Calu3 (cell line): ENCODE measurements at regions of chr20 and their contacts with region 1.

Region 1: DNA sequence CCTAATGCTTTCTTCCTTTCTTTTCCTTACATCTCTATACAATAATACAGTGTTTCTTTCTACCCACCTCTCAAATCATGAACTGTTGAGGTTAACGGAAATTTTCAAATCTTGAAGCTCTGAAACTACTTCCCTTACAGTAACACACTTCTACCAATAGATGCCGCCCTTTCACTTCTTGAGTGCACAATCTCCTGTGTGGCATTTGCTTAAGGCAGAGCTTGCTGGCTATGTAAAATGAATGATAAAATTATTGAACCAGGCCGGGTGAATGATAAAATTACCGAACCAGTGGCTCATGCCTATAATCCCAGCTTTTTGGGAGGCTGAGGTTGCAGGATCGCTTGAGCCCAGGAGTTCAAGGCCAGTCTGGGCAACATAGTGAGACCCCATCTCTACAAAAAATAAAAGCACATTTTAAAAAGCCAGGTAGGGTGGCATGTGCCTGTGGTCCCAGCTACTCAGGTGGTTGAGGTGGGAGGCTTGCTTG is 56.8 kb downstream of the KCNS1 start:
- DNase-seq: peak; percentile 67
- H3K4me3 Mint-ChIP-seq: no peak overlapping the region
- H3K27ac Mint-ChIP-seq: peak overlapping the region; percentile 8
- H3K4me1 Mint-ChIP-seq: peaks cover 33% of the 10 kb centered on the region
- H3K27me3 Mint-ChIP-seq: no peaks in the 10 kb centered on the region
- CTCF ChIP-seq: peak; percentile 73

Region 2: GRCh38 chr20:45080867-45081624 is 36.9 kb after region 1 on chr20:
- CTCF ChIA-PET with region 1: interaction called, 7 read pairs
- intact Hi-C with region 1: loop called (anchors 5 kb)
- DNase-seq: peak; percentile 58
- H3K4me3 Mint-ChIP-seq: no peak overlapping the region
- H3K27ac Mint-ChIP-seq: peak overlapping the region; percentile 5
- H3K4me1 Mint-ChIP-seq: no peaks in the 10 kb centered on the region
- H3K27me3 Mint-ChIP-seq: no peaks in the 10 kb centered on the region
- CTCF ChIP-seq: peak; percentile 69

Region 3: GRCh38 chr20:45104786-45105185 is 60.7 kb after region 1 on chr20:
- CTCF ChIA-PET with region 1: interaction called, 26 read pairs
- intact Hi-C with region 1: loop called (anchors 2 kb)
- DNase-seq: peak; percentile 80
- H3K4me3 Mint-ChIP-seq: no peak overlapping the region
- H3K27ac Mint-ChIP-seq: peak overlapping the region; percentile 21
- H3K4me1 Mint-ChIP-seq: peaks cover 48% of the 10 kb centered on the region
- H3K27me3 Mint-ChIP-seq: no peaks in the 10 kb centered on the region
- CTCF ChIP-seq: no peak

Region 4: GRCh38 chr20:45229264-45230056 is 185.3 kb after region 1 on chr20:
- CTCF ChIA-PET with region 1: interaction called, 33 read pairs
- intact Hi-C with region 1: loop called (anchors 1 kb)
- DNase-seq: peak; percentile 97
- H3K4me3 Mint-ChIP-seq: peak overlapping the region; percentile 50
- H3K27ac Mint-ChIP-seq: peak overlapping the region; percentile 35
- H3K4me1 Mint-ChIP-seq: peaks cover 10% of the 10 kb centered on the region
- H3K27me3 Mint-ChIP-seq: peaks cover 63% of the 10 kb centered on the region
- CTCF ChIP-seq: peak; percentile 99